Natural killer cell (primary cell): ENCODE measurements at regions of chrX and their contacts with region 1.

Region 1: GRCh38 chrX:119235872-119236622 is at the start of gene PGRMC1:
- DNase-seq: peak; percentile 63 to 89
- ATAC-seq: peak; percentile 95 to 98 (median 97)
- H3K4me3 ChIP-seq: peak within 1 kb of the TSS; percentile 75
- H3K4me3 Mint-ChIP-seq: peak within 1 kb of the TSS; percentile 73
- H3K27ac ChIP-seq: peak within 1 kb of the TSS; percentile 42
- H3K27ac Mint-ChIP-seq: peak within 1 kb of the TSS in 1 of 2 donors; percentile 84
- H3K4me1 ChIP-seq: peaks cover 19% of the 10 kb centered on the region
- H3K4me1 Mint-ChIP-seq: peaks cover 17 to 23% of the 10 kb centered on the region in 2 donors
- H3K27me3 ChIP-seq: no peaks in the 10 kb centered on the region
- H3K27me3 Mint-ChIP-seq: peaks cover 7 to 29% of the 10 kb centered on the region in 2 donors
- CTCF ChIP-seq: no peak
- total RNA-seq, gene PGRMC1: 11.5 to 13.6 (median 13.2) TPM

Region 2: DNA sequence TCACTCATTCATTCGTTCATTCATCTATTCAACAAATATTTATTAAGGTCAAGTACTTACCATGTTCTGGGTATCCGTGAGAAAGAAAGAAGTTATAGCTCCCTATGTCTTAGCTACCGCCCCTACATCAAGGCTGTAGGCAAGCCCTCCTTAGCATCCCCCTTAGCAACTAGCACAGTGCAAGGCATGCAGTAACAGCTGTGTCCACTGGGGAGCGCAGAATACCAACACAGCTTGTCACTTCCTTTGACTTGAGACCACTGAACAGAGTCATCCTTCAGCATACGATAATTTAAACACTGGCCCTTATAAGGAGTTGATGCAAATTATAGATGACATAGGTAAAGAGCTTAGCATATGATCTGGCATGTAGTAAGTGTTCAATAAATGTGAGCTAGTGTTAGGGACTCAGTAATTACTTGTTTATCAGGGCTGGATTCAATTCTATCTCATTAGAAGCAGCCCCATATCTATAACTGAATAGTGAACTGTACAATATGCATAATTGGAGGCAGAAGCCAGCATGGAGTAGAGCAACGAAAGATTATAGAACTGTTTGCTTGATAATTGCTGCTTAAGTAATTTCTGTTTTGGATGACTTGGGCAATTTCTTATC is 117.2 kb before region 1 on chrX:
- intact Hi-C with region 1: no loop called
- DNase-seq: peak; percentile 25 to 67
- ATAC-seq: peak; percentile 74 to 95 (median 82)
- H3K4me3 ChIP-seq: no peak overlapping the region
- H3K4me3 Mint-ChIP-seq: no peak overlapping the region
- H3K27ac ChIP-seq: no peak overlapping the region
- H3K27ac Mint-ChIP-seq: no peak overlapping the region
- H3K4me1 ChIP-seq: no peaks in the 10 kb centered on the region
- H3K4me1 Mint-ChIP-seq: no peaks in the 10 kb centered on the region
- H3K27me3 ChIP-seq: no peaks in the 10 kb centered on the region
- H3K27me3 Mint-ChIP-seq: peaks cover 0 to 34% of the 10 kb centered on the region in 2 donors
- CTCF ChIP-seq: peak; percentile 60

Region 3: DNA sequence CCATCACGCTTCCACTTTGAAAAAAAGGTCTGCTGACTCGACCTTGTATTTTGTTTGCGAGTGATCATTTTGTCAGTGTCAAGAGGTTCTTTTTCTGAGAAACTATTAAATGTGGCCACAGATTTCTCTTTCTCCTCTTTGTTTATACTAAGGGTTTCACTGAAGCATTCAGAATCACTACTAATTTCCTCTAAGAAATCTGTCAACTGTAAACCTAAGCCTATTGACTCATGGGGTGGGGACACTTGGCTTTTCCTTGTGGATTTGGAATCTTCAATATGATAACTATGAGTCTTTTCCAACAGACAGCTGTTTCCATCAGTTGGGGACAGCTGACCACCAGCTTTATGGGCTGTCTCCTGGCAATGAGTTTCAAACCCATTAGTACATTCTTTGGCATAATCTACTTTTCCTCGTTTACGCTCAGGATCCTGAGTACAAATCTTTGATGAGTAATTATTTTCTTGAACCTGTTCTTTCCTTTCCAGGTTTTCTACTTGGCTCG is 13.8 kb after region 1 on chrX:
- intact Hi-C with region 1: no loop called
- DNase-seq: no peak
- ATAC-seq: no peak
- H3K4me3 ChIP-seq: no peak overlapping the region
- H3K4me3 Mint-ChIP-seq: no peak overlapping the region
- H3K27ac ChIP-seq: no peak overlapping the region
- H3K27ac Mint-ChIP-seq: no peak overlapping the region
- H3K4me1 ChIP-seq: no peaks in the 10 kb centered on the region
- H3K4me1 Mint-ChIP-seq: no peaks in the 10 kb centered on the region
- H3K27me3 ChIP-seq: no peaks in the 10 kb centered on the region
- H3K27me3 Mint-ChIP-seq: peaks cover 3 to 4% of the 10 kb centered on the region in 2 donors
- CTCF ChIP-seq: no peak

Region 4: GRCh38 chrX:119468930-119469635 is 233.0 kb after region 1 on chrX:
- intact Hi-C with region 1: loop called (anchors 5 kb)
- DNase-seq: peak; percentile 85 to 92
- ATAC-seq: peak; percentile 76 to 93 (median 78)
- H3K4me3 ChIP-seq: peak overlapping the region; percentile 98
- H3K4me3 Mint-ChIP-seq: peak overlapping the region; percentile 89
- H3K27ac ChIP-seq: peak overlapping the region; percentile 97
- H3K27ac Mint-ChIP-seq: peak overlapping the region; percentile 87 to 92
- H3K4me1 ChIP-seq: peaks cover 15% of the 10 kb centered on the region
- H3K4me1 Mint-ChIP-seq: peaks cover 0 to 6% of the 10 kb centered on the region in 2 donors
- H3K27me3 ChIP-seq: no peaks in the 10 kb centered on the region
- H3K27me3 Mint-ChIP-seq: no peaks in the 10 kb centered on the region
- CTCF ChIP-seq: peak; percentile 69